ENCODE measurements at regions of chr17 and their contacts with region 1.

Region 1: DNA sequence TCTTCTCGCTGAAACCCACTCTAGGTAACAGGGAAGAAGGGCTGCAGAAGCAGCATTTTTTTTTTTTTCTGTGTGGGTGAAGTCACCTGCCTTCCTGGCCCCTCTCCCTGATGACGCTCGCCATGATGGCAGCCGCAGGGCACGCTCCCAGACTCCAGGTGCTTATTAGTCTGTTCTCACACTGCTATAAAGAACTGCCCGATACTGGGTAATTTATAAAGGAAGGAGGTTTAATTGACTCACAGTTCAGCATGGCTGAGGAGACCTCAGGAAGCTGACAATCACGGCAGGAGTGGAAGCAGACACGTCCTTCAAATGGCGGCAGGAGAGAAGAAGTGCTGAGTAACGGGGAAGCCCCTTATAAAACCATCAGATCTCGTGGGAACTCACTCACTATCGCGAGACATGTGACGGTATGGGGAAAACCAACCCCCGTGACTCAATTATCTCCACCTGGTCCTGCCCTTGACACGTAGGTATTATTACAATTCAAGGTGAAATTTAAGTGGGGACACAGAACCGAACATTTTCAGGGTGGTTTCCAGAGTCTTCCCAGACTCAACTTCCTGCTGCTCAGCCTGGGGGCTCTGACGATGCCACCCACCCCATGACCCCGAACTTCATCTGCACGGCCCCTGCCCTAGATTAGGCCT is 34.9 kb upstream of the NLRP1 start:
- DNase-seq: no peak

Region 2: GRCh38 chr17:5561731-5562571 is 57.3 kb before region 1 on chr17:
- intact Hi-C with region 1: loop called in 1 of 2 experiments (anchors 2 kb)
- DNase-seq: no peak

Region 3: DNA sequence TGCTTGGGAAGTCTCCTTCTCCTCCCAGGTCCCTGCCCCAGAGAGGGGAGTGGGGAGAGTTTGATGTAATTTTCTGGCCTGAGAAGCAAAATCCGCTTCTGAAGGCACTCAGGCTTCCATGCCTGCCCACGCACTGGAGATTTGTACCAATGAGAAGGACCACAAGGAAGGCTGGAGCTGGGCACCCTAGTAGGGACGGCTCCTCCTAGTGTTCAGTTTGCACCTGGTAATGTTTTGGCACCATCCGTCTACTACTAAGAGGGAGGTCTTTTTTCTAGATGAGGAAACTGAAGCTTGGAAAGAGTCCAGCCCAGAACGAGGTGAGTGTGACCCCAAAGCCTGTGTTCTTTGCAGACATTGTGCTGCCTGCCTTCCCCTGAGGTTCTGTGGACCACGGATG is 48.7 kb after region 1 on chr17:
- intact Hi-C with region 1: loop called in 1 of 2 experiments (anchors 1 kb)
- DNase-seq: no peak

Region 4: GRCh38 chr17:5747271-5747670 is 128.1 kb after region 1 on chr17:
- intact Hi-C with region 1: loop called in 1 of 2 experiments (anchors 10 kb)
- DNase-seq: no peak

Measured in posterior vena cava (tissue), 2 donors.